PC-3 (cell line): ENCODE measurements at regions of chr12 and their contacts with region 1.

Region 1: GRCh38 chr12:83865431-83865830 is 1047.2 kb downstream of the SLC6A15 start:
- DNase-seq: peak; percentile 79
- ATAC-seq: peak; percentile 60
- H3K4me3 ChIP-seq: no peak overlapping the region
- H3K27ac ChIP-seq: peak overlapping the region; percentile 66
- H3K4me1 ChIP-seq: peaks cover 33% of the 10 kb centered on the region
- H3K27me3 ChIP-seq: no peaks in the 10 kb centered on the region
- CTCF ChIP-seq: 0 out of 2 replicates have a peak, but pooled peaks have one; percentile 9

Region 2: GRCh38 chr12:83904175-83904574 is 38.7 kb after region 1 on chr12:
- CTCF ChIA-PET with region 1: no interaction called
- POLR2A ChIA-PET with region 1: no interaction called
- intact Hi-C with region 1: loop called (anchors 1 kb)
- DNase-seq: no peak
- ATAC-seq: no peak
- H3K4me3 ChIP-seq: no peak overlapping the region
- H3K27ac ChIP-seq: no peak overlapping the region
- H3K4me1 ChIP-seq: peaks cover 4% of the 10 kb centered on the region; the same call in 1 of the 2 replicates
- H3K27me3 ChIP-seq: no peaks in the 10 kb centered on the region
- CTCF ChIP-seq: no peak

Region 3: GRCh38 chr12:83985068-83985467 is 119.6 kb after region 1 on chr12:
- CTCF ChIA-PET with region 1: no interaction called
- POLR2A ChIA-PET with region 1: no interaction called
- intact Hi-C with region 1: loop called (anchors 10 kb)
- DNase-seq: peak; percentile 39
- ATAC-seq: no peak; the same call in 1 of the 2 replicates
- H3K4me3 ChIP-seq: no peak overlapping the region
- H3K27ac ChIP-seq: no peak overlapping the region
- H3K4me1 ChIP-seq: peaks cover 20% of the 10 kb centered on the region
- H3K27me3 ChIP-seq: no peaks in the 10 kb centered on the region
- CTCF ChIP-seq: no peak